ENCODE measurements at regions of chr11 and their contacts with region 1.

Region 1: DNA sequence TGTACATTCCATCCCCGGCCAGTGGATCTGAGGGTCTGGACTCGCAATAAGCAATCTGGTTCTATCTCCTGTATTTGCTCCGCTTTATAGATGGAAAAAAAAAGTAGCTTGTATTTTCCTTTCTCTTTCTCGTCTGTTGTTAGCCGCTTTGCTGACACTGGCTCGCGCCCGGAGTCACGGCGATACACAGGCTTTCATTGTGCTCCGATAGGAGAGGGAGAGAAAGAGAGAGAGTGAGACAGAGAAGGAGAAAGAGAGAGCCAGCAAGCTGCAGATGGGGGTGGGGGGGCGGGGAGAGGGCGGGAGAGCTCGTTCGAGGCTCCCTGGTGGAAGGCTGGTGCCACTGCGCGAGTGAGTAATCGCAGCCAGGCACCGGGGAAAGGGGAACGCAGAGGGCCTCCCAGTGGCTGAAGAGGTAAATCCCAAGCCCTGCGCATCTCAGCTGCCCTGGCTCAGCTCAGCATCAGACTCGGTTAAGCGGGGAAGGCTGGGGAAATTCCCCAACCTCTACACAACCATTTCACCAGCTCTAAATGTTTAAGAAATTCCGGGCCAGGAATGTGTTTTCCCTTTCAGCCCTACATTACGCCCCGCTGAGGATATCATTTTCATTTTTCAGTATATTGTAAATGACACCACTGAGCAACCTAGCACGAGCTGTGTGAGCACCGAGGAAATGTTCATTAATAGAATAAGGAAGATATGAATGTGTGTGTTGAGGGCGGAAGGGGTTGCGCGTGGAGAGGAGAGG is at the start of gene MAML2:
- DNase-seq: peak; percentile 86 to 94
- ATAC-seq: peak; percentile 99
- H3K4me3 ChIP-seq: peak within 1 kb of the TSS; percentile 74
- H3K27ac ChIP-seq: peak within 1 kb of the TSS; percentile 83 to 85
- H3K4me1 ChIP-seq: peaks cover 24% of the 10 kb centered on the region
- CTCF ChIP-seq: peak; percentile 78
- EP300 ChIP-seq: no peak
- POLR2A ChIP-seq: no peak
- RAD21 ChIP-seq: peak; percentile 84 to 97
- polyA plus RNA-seq, gene MAML2: 2.5 and 3.2 TPM in 2 replicates

Region 2: GRCh38 chr11:95835768-95836488 is 507.2 kb before region 1 on chr11:
- CTCF ChIA-PET with region 1: interaction called, 22 read pairs
- POLR2A ChIA-PET with region 1: interaction called, 3 read pairs
- DNase-seq: peak; percentile 48 to 66
- ATAC-seq: peak; percentile 95 to 97
- H3K4me3 ChIP-seq: no peak overlapping the region
- H3K27ac ChIP-seq: no peak overlapping the region
- H3K4me1 ChIP-seq: peaks cover 6% of the 10 kb centered on the region; the same call in 2 of the 3 replicates
- CTCF ChIP-seq: peak; percentile 76
- EP300 ChIP-seq: no peak
- POLR2A ChIP-seq: no peak
- RAD21 ChIP-seq: peak; percentile 79 to 85

Region 3: GRCh38 chr11:96237766-96238266 is 105.3 kb before region 1 on chr11:
- CTCF ChIA-PET with region 1: interaction called, 17 read pairs
- POLR2A ChIA-PET with region 1: interaction called, 14 read pairs
- DNase-seq: peak in 1 of 2 experiments; percentile 7
- ATAC-seq: no peak
- H3K4me3 ChIP-seq: no peak overlapping the region
- H3K27ac ChIP-seq: peak overlapping the region in 1 of 2 experiments; percentile 40; a peak in 4 of 6 replicates
- H3K4me1 ChIP-seq: peaks cover 55% of the 10 kb centered on the region
- CTCF ChIP-seq: no peak
- EP300 ChIP-seq: no peak
- POLR2A ChIP-seq: no peak
- RAD21 ChIP-seq: no peak

Region 4: DNA sequence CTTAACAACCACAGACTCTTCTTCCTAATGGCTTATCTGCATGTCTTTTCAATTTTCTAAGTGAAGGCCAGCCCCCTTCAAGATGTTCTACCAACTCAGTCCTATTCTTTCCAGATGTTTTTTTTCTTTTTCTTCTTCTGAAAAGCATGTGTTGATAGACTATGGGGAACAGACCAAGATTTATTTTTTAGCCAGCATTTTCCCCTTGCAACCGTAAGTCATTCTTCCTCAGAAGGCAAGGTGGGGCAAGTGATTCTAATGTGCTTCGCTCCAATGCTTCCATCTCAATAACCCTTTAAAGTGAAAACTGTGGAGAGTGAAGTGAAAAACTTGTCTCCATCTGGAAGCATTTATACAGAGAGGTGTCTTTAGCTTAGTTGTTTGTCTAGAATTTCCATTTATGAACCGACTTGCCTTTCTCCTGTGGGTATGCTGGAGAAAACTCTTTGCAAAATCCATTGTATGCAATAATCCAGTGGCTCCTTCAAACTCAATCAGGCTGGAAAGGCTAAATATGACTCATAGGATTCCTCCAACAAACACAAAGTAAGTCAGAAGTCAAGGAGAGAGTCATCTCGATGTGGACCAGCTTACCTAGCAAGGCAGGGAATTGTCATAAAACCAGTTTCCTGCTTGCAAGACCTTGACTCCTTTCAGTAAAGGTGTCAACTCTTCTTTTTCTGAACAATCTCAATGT is 83.9 kb before region 1 on chr11:
- CTCF ChIA-PET with region 1: interaction called, 13 read pairs
- POLR2A ChIA-PET with region 1: no interaction called
- DNase-seq: peak; percentile 10 to 26
- ATAC-seq: peak; percentile 59 to 72; a peak in 4 of 6 replicates
- H3K4me3 ChIP-seq: no peak overlapping the region
- H3K27ac ChIP-seq: peak overlapping the region; percentile 1 to 67; a peak in 3 of 6 replicates
- H3K4me1 ChIP-seq: peaks cover 46% of the 10 kb centered on the region
- CTCF ChIP-seq: no peak
- EP300 ChIP-seq: no peak
- POLR2A ChIP-seq: no peak
- RAD21 ChIP-seq: no peak

Region 5: GRCh38 chr11:96306933-96307775 is 36.0 kb before region 1 on chr11:
- CTCF ChIA-PET with region 1: interaction called, 25 read pairs
- POLR2A ChIA-PET with region 1: interaction called, 8 read pairs
- DNase-seq: peak; percentile 67 to 94
- ATAC-seq: peak; percentile 92 to 96
- H3K4me3 ChIP-seq: peak overlapping the region; percentile 31
- H3K27ac ChIP-seq: peak overlapping the region; percentile 81 to 92
- H3K4me1 ChIP-seq: peaks cover 74% of the 10 kb centered on the region
- CTCF ChIP-seq: no peak
- EP300 ChIP-seq: no peak
- POLR2A ChIP-seq: no peak
- RAD21 ChIP-seq: no peak

Region 6: GRCh38 chr11:96331699-96332116 is 11.4 kb before region 1 on chr11:
- CTCF ChIA-PET with region 1: interaction called, 15 read pairs
- POLR2A ChIA-PET with region 1: no interaction called
- DNase-seq: no peak
- ATAC-seq: no peak
- H3K4me3 ChIP-seq: no peak overlapping the region
- H3K27ac ChIP-seq: no peak overlapping the region
- H3K4me1 ChIP-seq: peaks cover 34% of the 10 kb centered on the region
- CTCF ChIP-seq: no peak
- EP300 ChIP-seq: no peak
- POLR2A ChIP-seq: no peak
- RAD21 ChIP-seq: no peak

Region 7: DNA sequence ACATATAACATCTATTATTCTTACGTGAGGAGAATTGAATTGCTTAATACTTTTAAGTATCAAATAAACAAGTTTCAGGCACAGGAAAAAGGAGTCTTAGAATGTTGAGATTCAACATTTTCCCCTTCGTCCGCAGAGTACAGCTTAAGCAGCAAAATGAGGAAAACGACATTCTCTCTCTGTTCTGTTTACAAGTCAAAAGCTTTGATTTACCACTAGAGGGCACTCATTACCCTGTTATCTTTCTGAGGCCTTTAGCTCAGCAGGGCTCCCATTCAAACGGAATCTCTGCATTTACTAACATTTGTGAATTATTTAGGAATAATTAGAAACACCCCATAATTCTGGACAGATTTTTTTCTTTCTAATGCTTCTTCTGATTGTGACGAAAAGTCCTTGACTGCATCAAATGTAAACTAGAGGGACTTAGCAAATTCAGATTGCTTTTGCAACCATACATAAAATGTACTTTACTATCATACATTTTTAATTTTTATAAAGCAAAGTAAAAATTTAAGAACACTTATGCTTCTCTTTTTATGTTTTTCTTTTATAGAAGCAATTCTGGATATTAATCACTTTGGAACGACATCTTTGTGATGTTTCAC is 121.7 kb after region 1 on chr11:
- CTCF ChIA-PET with region 1: no interaction called
- POLR2A ChIA-PET with region 1: no interaction called
- DNase-seq: peak; percentile 70 to 72
- ATAC-seq: peak; percentile 91 to 95
- H3K4me3 ChIP-seq: no peak overlapping the region
- H3K27ac ChIP-seq: no peak overlapping the region
- H3K4me1 ChIP-seq: no peaks in the 10 kb centered on the region
- CTCF ChIP-seq: peak; percentile 57; the same call in 2 of the 3 replicates
- EP300 ChIP-seq: no peak
- POLR2A ChIP-seq: no peak
- RAD21 ChIP-seq: peak; percentile 74 to 77